H1 (cell line): ENCODE measurements at regions of chr4 and their contacts with region 1.

Region 1: DNA sequence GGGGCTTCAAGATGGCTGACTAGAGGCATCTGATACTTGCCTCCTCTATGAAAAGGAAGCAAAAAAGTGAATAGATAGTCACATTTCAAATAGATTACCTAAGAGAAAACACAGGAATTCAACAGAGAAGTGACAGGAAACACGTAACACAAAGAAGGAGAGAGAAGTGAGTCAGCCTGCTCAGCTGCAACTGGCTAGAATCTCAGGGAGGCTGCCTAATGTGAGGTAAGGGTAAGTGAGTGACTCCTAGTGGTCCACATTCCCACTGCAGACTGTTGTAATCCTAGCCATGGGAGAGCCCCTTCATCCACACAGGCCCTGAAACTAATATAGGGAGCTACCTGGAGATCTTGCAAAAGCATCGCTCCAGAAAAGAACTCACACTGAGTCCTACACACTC is 179.2 kb downstream of the SLC7A11 start:
- DNase-seq: no peak
- H3K4me3 ChIP-seq: no peak overlapping the region
- H3K27ac ChIP-seq: no peak overlapping the region
- H3K4me1 ChIP-seq: no peaks in the 10 kb centered on the region
- H3K27me3 ChIP-seq: no peaks in the 10 kb centered on the region
- CTCF ChIP-seq: peak; percentile 25 to 49 (median 38); a peak in 3 of 4 replicates
- EP300 ChIP-seq: no peak
- POLR2A ChIP-seq: no peak
- RAD21 ChIP-seq: peak; percentile 31 to 47

Region 2: GRCh38 chr4:138035781-138036258 is 27.1 kb before region 1 on chr4:
- CTCF ChIA-PET with region 1: interaction called, 12 read pairs
- POLR2A ChIA-PET with region 1: no interaction called
- DNase-seq: no peak
- H3K4me3 ChIP-seq: no peak overlapping the region
- H3K27ac ChIP-seq: no peak overlapping the region
- H3K4me1 ChIP-seq: no peaks in the 10 kb centered on the region
- H3K27me3 ChIP-seq: no peaks in the 10 kb centered on the region
- CTCF ChIP-seq: peak in 2 of 3 experiments; percentile 61 to 77; a peak in 3 of 4 replicates
- EP300 ChIP-seq: no peak
- POLR2A ChIP-seq: no peak
- RAD21 ChIP-seq: peak; percentile 91 to 95

Region 3: GRCh38 chr4:138050601-138051000 is 12.3 kb before region 1 on chr4:
- CTCF ChIA-PET with region 1: interaction called, 31 read pairs
- POLR2A ChIA-PET with region 1: interaction called, 3 read pairs
- DNase-seq: peak in 1 of 2 experiments; percentile 54
- H3K4me3 ChIP-seq: no peak overlapping the region
- H3K27ac ChIP-seq: no peak overlapping the region
- H3K4me1 ChIP-seq: peaks cover 0 to 9% (median 6%) of the 10 kb centered on the region in 4 experiments; a peak in 6 of 7 replicates
- H3K27me3 ChIP-seq: no peaks in the 10 kb centered on the region
- CTCF ChIP-seq: no peak
- EP300 ChIP-seq: no peak
- POLR2A ChIP-seq: no peak
- RAD21 ChIP-seq: no peak; a peak in 1 of 4 replicates

Region 4: GRCh38 chr4:138428611-138429010 is 365.7 kb after region 1 on chr4:
- CTCF ChIA-PET with region 1: no interaction called
- POLR2A ChIA-PET with region 1: no interaction called
- DNase-seq: no peak
- H3K4me3 ChIP-seq: no peak overlapping the region
- H3K27ac ChIP-seq: no peak overlapping the region
- H3K4me1 ChIP-seq: no peaks in the 10 kb centered on the region
- H3K27me3 ChIP-seq: no peaks in the 10 kb centered on the region
- CTCF ChIP-seq: no peak
- EP300 ChIP-seq: no peak
- POLR2A ChIP-seq: no peak
- RAD21 ChIP-seq: no peak